ENCODE measurements at regions of chr9 and their contacts with region 1.

Region 1: GRCh38 chr9:34637356-34638137 is at the start of gene SIGMAR1:
- DNase-seq: peak; percentile 74
- ATAC-seq: peak; percentile 87
- H3K4me3 ChIP-seq: peak within 1 kb of the TSS; percentile 66 to 91 (median 86)
- H3K27ac ChIP-seq: peak within 1 kb of the TSS; percentile 70
- H3K4me1 ChIP-seq: peaks cover 59% of the 10 kb centered on the region
- H3K27me3 ChIP-seq: no peaks in the 10 kb centered on the region; a peak in 1 of 5 replicates
- CTCF ChIP-seq: no peak; the same call in 1 of the 2 replicates
- EP300 ChIP-seq: no peak
- POLR2A ChIP-seq: peak in 1 of 2 experiments; percentile 72; a peak in 2 of 4 replicates
- RAD21 ChIP-seq: peak; percentile 46; the same call in 1 of the 2 replicates
- total RNA-seq, gene SIGMAR1: 28.5 and 60.8 TPM in 2 replicates

Region 2: GRCh38 chr9:34611829-34612630 is 25.5 kb before region 1 on chr9 and contains the start of gene RPP25L:
- CTCF ChIA-PET with region 1: interaction called, 54 read pairs
- POLR2A ChIA-PET with region 1: interaction called, 13 read pairs
- in situ Hi-C with region 1: no loop called
- intact Hi-C with region 1: loop called (anchors 1 kb)
- DNase-seq: peak; percentile 62
- ATAC-seq: peak; percentile 93
- H3K4me3 ChIP-seq: peak within 1 kb of the TSS; percentile 84 to 91 (median 89)
- H3K27ac ChIP-seq: peak within 1 kb of the TSS; percentile 78
- H3K4me1 ChIP-seq: peaks cover 34% of the 10 kb centered on the region
- H3K27me3 ChIP-seq: no peaks in the 10 kb centered on the region
- CTCF ChIP-seq: peak; percentile 25; the same call in 1 of the 2 replicates
- EP300 ChIP-seq: no peak
- POLR2A ChIP-seq: peak; percentile 82 to 97
- RAD21 ChIP-seq: peak; percentile 3; the same call in 1 of the 2 replicates
- total RNA-seq, gene RPP25L: 24.5 and 32.1 TPM in 2 replicates

Region 3: GRCh38 chr9:34620061-34620994 is 17.2 kb before region 1 on chr9 and contains the start of gene DCTN3:
- CTCF ChIA-PET with region 1: no interaction called
- POLR2A ChIA-PET with region 1: interaction called, 14 read pairs
- in situ Hi-C with region 1: no loop called
- intact Hi-C with region 1: no loop called
- DNase-seq: peak; percentile 91
- ATAC-seq: peak; percentile 98
- H3K4me3 ChIP-seq: peak within 1 kb of the TSS; percentile 89 to 93 (median 89)
- H3K27ac ChIP-seq: no peak within 1 kb of the TSS
- H3K4me1 ChIP-seq: peaks cover 17% of the 10 kb centered on the region
- H3K27me3 ChIP-seq: peaks cover 0 to 2% of the 10 kb centered on the region in 2 experiments; a peak in 2 of 5 replicates
- CTCF ChIP-seq: no peak
- EP300 ChIP-seq: no peak
- POLR2A ChIP-seq: peak; percentile 49 to 57
- RAD21 ChIP-seq: no peak
- total RNA-seq, gene DCTN3: 27.4 and 30.8 TPM in 2 replicates

Region 4: DNA sequence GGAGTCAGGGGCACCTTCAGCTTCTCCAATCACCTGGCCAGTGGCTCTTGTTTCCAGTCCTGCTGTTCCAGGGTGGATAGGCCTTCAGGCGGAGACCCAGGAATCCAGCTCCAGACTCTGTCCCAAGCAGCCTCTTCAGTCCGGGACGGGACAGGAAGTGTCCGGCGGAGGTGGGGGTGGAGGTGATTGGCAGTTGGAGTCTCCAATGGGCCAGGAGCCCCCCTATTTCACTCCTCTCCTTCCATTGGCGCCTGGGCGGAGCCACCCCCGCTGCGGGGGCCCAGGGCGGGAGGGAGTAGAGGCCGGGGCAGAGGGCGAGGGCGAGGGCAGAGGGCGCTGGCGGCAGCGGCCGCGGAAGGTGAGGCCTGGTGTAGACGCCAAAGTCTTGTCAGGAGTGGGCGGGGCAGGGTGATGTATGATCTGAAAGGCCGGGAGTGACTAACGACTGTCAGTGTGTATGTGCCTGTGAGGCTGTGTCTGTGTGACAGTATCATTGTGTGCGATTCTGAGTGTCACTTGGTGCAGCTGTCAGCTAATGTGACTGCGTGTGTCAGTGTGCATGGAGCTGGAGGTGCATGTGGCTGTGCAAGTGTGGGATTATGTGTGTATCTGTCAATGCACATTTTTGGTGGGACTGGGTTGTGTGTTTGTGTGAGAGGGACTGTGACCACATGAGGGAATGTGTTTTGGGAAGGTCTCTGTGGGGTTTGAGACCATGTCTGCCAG is 14.5 kb after region 1 on chr9 and contains the start of gene IL11RA:
- CTCF ChIA-PET with region 1: interaction called, 9 read pairs
- POLR2A ChIA-PET with region 1: interaction called, 100 read pairs
- in situ Hi-C with region 1: no loop called
- intact Hi-C with region 1: no loop called
- DNase-seq: peak; percentile 92
- ATAC-seq: peak; percentile 84
- H3K4me3 ChIP-seq: peak within 1 kb of the TSS; percentile 45 to 67 (median 57)
- H3K27ac ChIP-seq: peak within 1 kb of the TSS; percentile 75
- H3K4me1 ChIP-seq: peaks cover 57% of the 10 kb centered on the region
- H3K27me3 ChIP-seq: no peaks in the 10 kb centered on the region; a peak in 3 of 5 replicates
- CTCF ChIP-seq: peak; percentile 62
- EP300 ChIP-seq: peak in 1 of 2 experiments; percentile 48; a peak in 1 of 4 replicates
- POLR2A ChIP-seq: peak in 1 of 2 experiments; percentile 25; a peak in 1 of 4 replicates
- RAD21 ChIP-seq: 0 out of 2 replicates have a peak, but pooled peaks have one; percentile 17
- total RNA-seq, gene IL11RA: 0.83 and 2.0 TPM in 2 replicates

Region 5: GRCh38 chr9:34665381-34666250 is 28.1 kb after region 1 on chr9:
- CTCF ChIA-PET with region 1: interaction called, 7 read pairs
- POLR2A ChIA-PET with region 1: interaction called, 13 read pairs
- in situ Hi-C with region 1: no loop called
- intact Hi-C with region 1: no loop called
- DNase-seq: peak; percentile 56
- ATAC-seq: peak; percentile 79
- H3K4me3 ChIP-seq: peak overlapping the region; percentile 66 to 79 (median 66)
- H3K27ac ChIP-seq: peak overlapping the region; percentile 71
- H3K4me1 ChIP-seq: peaks cover 24% of the 10 kb centered on the region
- H3K27me3 ChIP-seq: no peaks in the 10 kb centered on the region
- CTCF ChIP-seq: peak; percentile 13; the same call in 1 of the 2 replicates
- EP300 ChIP-seq: no peak
- POLR2A ChIP-seq: no peak; a peak in 1 of 4 replicates
- RAD21 ChIP-seq: no peak